ENCODE measurements at regions of chr2 and their contacts with region 1.

Region 1: DNA sequence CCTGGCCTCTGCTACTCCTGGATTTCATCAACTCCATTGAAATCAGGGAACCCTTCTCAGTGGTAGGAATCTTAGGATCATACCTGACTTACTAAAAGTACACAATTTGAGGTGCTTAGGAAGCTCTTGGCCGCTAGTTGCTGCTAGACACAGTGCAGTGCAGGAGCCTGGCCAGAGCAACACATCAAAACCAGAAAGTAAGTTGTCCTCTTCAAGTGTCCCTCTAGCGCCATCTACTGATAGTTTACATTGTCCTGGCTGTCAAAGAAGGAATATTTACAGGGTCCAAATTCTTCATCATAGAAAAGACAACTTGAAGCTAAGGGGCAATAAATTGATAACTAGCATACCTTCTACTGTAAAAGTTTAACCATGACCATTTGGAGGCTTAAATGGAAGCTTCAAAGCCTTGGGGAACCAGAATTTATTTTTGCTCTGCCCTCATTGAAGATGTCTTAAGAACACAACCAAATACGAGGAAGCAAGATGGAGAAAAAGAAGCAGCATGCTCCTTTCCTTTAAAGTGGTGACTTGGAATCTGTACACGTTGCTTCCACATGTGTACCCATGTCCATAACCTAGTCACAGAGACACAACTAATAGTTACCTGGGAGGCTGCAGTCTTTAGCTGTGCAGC is 889.1 kb upstream of the GCFC2 start:
- DNase-seq: peak; percentile 33
- H3K4me3 ChIP-seq: no peak overlapping the region
- H3K27ac ChIP-seq: no peak overlapping the region
- H3K4me1 ChIP-seq: no peaks in the 10 kb centered on the region
- H3K27me3 ChIP-seq: no peaks in the 10 kb centered on the region
- CTCF ChIP-seq: peak; percentile 25 to 66 (median 60)
- POLR2A ChIP-seq: no peak

Region 2: GRCh38 chr2:75787532-75788132 is 812.2 kb before region 1 on chr2:
- intact Hi-C with region 1: loop called (anchors 5 kb)
- DNase-seq: no peak
- H3K4me3 ChIP-seq: no peak overlapping the region
- H3K27ac ChIP-seq: no peak overlapping the region
- H3K4me1 ChIP-seq: no peaks in the 10 kb centered on the region
- H3K27me3 ChIP-seq: no peaks in the 10 kb centered on the region
- CTCF ChIP-seq: peak in 3 of 4 experiments; percentile 27 to 42 (median 39)
- POLR2A ChIP-seq: no peak

Region 3: DNA sequence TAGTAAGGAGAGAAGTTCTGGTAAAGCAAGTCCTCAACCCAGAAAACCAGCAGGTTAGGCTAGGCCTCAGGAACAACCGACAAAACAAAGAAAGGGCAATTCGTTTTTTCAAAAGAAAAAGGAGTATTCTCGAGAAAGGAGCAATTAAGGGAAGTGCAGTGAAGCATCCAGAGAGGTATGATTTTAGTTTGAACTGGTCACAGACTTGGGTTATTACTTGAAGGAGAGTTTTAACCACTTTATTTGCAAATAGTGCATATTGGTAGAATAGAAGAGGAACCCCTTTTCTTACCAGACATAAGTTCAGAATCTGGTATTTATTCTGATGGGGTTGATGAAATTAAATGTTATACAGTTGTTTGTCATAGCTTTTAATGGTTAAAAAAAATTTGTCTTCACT is 779.2 kb before region 1 on chr2:
- intact Hi-C with region 1: no loop called
- DNase-seq: no peak
- H3K4me3 ChIP-seq: no peak overlapping the region
- H3K27ac ChIP-seq: no peak overlapping the region
- H3K4me1 ChIP-seq: no peaks in the 10 kb centered on the region
- H3K27me3 ChIP-seq: no peaks in the 10 kb centered on the region
- CTCF ChIP-seq: no peak
- POLR2A ChIP-seq: no peak

Region 4: GRCh38 chr2:76187415-76187814 is 412.4 kb before region 1 on chr2:
- intact Hi-C with region 1: no loop called
- DNase-seq: no peak
- H3K4me3 ChIP-seq: no peak overlapping the region
- H3K27ac ChIP-seq: no peak overlapping the region
- H3K4me1 ChIP-seq: no peaks in the 10 kb centered on the region
- H3K27me3 ChIP-seq: no peaks in the 10 kb centered on the region
- CTCF ChIP-seq: no peak
- POLR2A ChIP-seq: no peak

Region 5: GRCh38 chr2:76197842-76198448 is 401.9 kb before region 1 on chr2:
- intact Hi-C with region 1: loop called (anchors 5 kb)
- DNase-seq: peak; percentile 43
- H3K4me3 ChIP-seq: no peak overlapping the region
- H3K27ac ChIP-seq: no peak overlapping the region
- H3K4me1 ChIP-seq: no peaks in the 10 kb centered on the region
- H3K27me3 ChIP-seq: no peaks in the 10 kb centered on the region
- CTCF ChIP-seq: peak; percentile 47 to 78 (median 58)
- POLR2A ChIP-seq: no peak

Region 6: GRCh38 chr2:76445880-76446279 is 154.0 kb before region 1 on chr2:
- intact Hi-C with region 1: no loop called
- DNase-seq: no peak
- H3K4me3 ChIP-seq: no peak overlapping the region
- H3K27ac ChIP-seq: no peak overlapping the region
- H3K4me1 ChIP-seq: no peaks in the 10 kb centered on the region
- H3K27me3 ChIP-seq: no peaks in the 10 kb centered on the region
- CTCF ChIP-seq: no peak
- POLR2A ChIP-seq: no peak

Measured in prostate gland (tissue), 2 donors.